ENCODE measurements at regions of chr20 and their contacts with region 1.

Region 1: GRCh38 chr20:49484180-49485140 is 2.0 kb upstream of the KCNB1 start:
- DNase-seq: peak; percentile 61
- ATAC-seq: peak; percentile 97
- H3K4me3 ChIP-seq: peak overlapping the region; percentile 22
- H3K27ac ChIP-seq: no peak overlapping the region
- H3K4me1 ChIP-seq: no peaks in the 10 kb centered on the region
- H3K27me3 ChIP-seq: peaks cover 55% of the 10 kb centered on the region
- CTCF ChIP-seq: peak; percentile 79
- POLR2A ChIP-seq: no peak
- RAD21 ChIP-seq: peak; percentile 71

Region 2: DNA sequence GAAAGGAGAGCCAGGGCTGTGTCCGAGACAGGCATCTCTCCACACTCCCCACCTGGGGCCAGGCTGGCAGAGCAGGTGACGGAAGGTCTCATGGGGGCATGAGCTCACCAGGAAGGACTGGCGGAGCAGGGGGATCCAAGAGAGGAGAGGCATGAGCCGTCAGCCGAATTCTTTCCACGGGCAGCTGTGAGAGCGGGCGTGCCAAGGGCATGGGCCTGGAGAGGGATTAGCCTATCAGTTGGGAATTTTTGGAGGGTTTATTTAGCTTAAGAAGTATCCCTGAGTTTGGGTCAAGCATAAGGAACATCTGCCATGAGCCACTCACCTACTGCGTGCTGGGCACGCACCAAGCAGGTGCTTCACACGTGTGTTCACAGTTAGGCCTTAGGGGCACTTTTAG is 146.4 kb before region 1 on chr20:
- CTCF ChIA-PET with region 1: interaction called, 4 read pairs
- POLR2A ChIA-PET with region 1: no interaction called
- dilution Hi-C with region 1: no loop called
- in situ Hi-C with region 1: no loop called
- intact Hi-C with region 1: loop called (anchors 1 kb)
- DNase-seq: no peak
- ATAC-seq: no peak
- H3K4me3 ChIP-seq: no peak overlapping the region
- H3K27ac ChIP-seq: no peak overlapping the region
- H3K4me1 ChIP-seq: peaks cover 2% of the 10 kb centered on the region; the same call in 1 of the 2 replicates
- H3K27me3 ChIP-seq: peaks cover 16% of the 10 kb centered on the region
- CTCF ChIP-seq: no peak
- POLR2A ChIP-seq: no peak
- RAD21 ChIP-seq: no peak

Region 3: DNA sequence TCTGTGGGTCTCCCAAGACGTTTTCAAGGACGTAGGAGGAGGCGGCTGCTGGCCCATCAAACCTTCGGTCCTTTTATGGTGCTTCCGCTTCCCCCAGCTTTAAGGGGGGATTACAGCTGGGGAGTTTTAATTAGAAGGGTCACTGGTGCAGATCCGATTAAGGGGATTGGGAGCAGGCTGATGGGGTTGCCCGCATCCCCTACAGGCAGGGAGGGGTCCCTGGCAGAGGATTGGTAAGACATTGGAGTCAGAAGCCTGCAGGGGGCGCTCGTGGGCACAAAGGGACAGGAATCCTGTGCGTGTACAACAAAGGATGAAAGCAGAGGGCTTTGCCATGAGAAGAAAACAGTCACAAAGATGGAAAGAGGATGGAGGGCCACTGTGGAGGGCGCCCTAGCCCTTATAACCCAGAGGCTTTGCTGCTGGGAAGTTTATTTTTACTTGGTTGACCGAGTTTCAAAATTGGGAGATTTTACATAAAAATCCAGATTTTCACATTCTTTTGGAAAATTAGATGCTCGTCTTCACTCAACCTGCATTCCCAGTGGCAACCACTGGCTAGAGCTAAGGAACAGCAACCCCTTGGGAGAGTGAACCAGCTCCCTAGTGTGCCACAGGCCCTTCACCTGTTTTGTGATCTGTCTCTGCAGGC is 99.9 kb before region 1 on chr20:
- CTCF ChIA-PET with region 1: interaction called, 3 read pairs
- POLR2A ChIA-PET with region 1: no interaction called
- dilution Hi-C with region 1: no loop called
- in situ Hi-C with region 1: no loop called
- intact Hi-C with region 1: loop called (anchors 10 kb)
- DNase-seq: peak; percentile 26
- ATAC-seq: peak; percentile 57; the same call in 1 of the 2 replicates
- H3K4me3 ChIP-seq: no peak overlapping the region
- H3K27ac ChIP-seq: no peak overlapping the region
- H3K4me1 ChIP-seq: no peaks in the 10 kb centered on the region
- H3K27me3 ChIP-seq: peaks cover 34% of the 10 kb centered on the region
- CTCF ChIP-seq: peak; percentile 57
- POLR2A ChIP-seq: no peak
- RAD21 ChIP-seq: peak; percentile 38; the same call in 1 of the 2 replicates

Region 4: DNA sequence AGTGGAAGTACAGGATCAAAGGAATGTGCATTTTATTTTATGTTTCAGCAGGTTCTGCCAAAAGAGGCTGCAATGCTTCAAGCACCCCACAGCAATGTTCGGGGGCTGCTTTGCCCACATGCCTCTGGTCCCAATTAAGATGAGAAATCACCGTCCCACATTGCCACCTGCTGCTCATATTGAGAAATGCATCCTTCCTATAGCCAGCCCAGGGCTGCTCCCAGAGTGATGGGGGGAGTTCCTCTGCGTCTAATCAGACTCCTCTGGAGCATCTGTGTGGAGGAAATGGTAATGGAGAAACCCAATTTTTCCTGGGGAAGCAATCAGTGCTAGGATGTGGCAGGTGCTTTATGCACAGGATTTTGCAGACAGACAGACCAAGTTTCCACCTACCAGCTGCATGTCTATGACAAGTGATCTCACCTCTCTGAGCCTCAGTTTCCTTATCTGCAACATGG is 49.8 kb after region 1 on chr20:
- CTCF ChIA-PET with region 1: no interaction called
- POLR2A ChIA-PET with region 1: no interaction called
- dilution Hi-C with region 1: no loop called
- in situ Hi-C with region 1: no loop called
- intact Hi-C with region 1: loop called (anchors 5 kb)
- DNase-seq: peak; percentile 44
- ATAC-seq: peak; percentile 97
- H3K4me3 ChIP-seq: no peak overlapping the region
- H3K27ac ChIP-seq: no peak overlapping the region
- H3K4me1 ChIP-seq: no peaks in the 10 kb centered on the region
- H3K27me3 ChIP-seq: no peaks in the 10 kb centered on the region; the same call in 1 of the 2 replicates
- CTCF ChIP-seq: peak; percentile 77
- POLR2A ChIP-seq: no peak
- RAD21 ChIP-seq: peak; percentile 75

Region 5: GRCh38 chr20:49544535-49544934 is 60.1 kb after region 1 on chr20:
- CTCF ChIA-PET with region 1: no interaction called
- POLR2A ChIA-PET with region 1: no interaction called
- dilution Hi-C with region 1: no loop called
- in situ Hi-C with region 1: no loop called
- intact Hi-C with region 1: no loop called
- DNase-seq: no peak
- ATAC-seq: no peak
- H3K4me3 ChIP-seq: no peak overlapping the region
- H3K27ac ChIP-seq: no peak overlapping the region
- H3K4me1 ChIP-seq: no peaks in the 10 kb centered on the region
- H3K27me3 ChIP-seq: peaks cover 4% of the 10 kb centered on the region; the same call in 1 of the 2 replicates
- CTCF ChIP-seq: no peak
- POLR2A ChIP-seq: no peak
- RAD21 ChIP-seq: no peak

Region 6: GRCh38 chr20:49585585-49586245 is 101.3 kb after region 1 on chr20:
- CTCF ChIA-PET with region 1: interaction called, 11 read pairs
- POLR2A ChIA-PET with region 1: no interaction called
- dilution Hi-C with region 1: no loop called
- in situ Hi-C with region 1: no loop called
- intact Hi-C with region 1: no loop called
- DNase-seq: no peak
- ATAC-seq: no peak
- H3K4me3 ChIP-seq: no peak overlapping the region
- H3K27ac ChIP-seq: peak overlapping the region; percentile 21; the same call in 1 of the 2 replicates
- H3K4me1 ChIP-seq: peaks cover 38% of the 10 kb centered on the region
- H3K27me3 ChIP-seq: no peaks in the 10 kb centered on the region
- CTCF ChIP-seq: no peak
- POLR2A ChIP-seq: no peak
- RAD21 ChIP-seq: no peak

Measured in IMR-90 (cell line).